ENCODE measurements at regions of chr15 and their contacts with region 1.

Region 1: GRCh38 chr15:55897560-55898336 is 95.7 kb downstream of the NEDD4 start:
- DNase-seq: peak; percentile 32
- CTCF ChIP-seq: peak; percentile 78

Region 2: DNA sequence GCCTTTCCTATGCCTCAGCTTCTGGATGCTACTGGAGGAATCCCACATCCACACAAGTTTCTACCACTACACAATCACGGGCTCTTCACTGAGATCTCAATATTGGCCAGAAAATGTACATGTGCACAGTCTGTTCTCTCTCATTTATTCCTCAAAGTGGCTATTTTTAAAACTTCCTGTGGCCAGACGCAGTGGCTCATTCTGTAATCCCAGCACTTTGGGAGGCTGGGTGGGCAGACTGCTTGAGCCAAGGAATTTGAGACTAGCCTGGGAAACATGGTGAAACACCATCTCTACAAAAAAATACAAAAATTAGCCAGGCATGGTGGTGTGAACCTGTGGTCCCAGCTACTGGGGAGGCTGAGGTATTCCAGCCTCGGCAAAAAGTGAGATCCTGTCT is 63.4 kb before region 1 on chr15:
- CTCF ChIA-PET with region 1: no interaction called
- POLR2A ChIA-PET with region 1: no interaction called
- DNase-seq: no peak
- CTCF ChIP-seq: no peak

Region 3: DNA sequence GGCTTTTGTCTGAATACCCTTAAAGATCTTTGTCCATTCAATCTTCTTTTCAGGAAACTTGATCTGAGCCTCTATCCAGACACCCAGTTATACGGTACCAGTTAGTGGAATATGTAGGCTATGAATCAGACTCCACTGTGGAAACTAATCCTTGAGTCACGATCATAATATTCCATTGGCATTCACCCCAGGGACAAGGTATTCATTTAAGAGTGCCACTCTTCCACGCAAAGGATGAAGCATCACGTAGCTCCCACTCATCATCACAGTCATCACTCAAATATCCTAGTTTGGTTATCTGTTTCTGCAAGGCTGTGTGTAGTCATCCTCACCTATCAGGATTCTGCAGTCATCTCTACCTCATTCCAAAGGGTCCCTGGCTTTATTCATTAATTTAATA is 10.0 kb after region 1 on chr15:
- CTCF ChIA-PET with region 1: interaction called, 11 read pairs
- POLR2A ChIA-PET with region 1: no interaction called
- DNase-seq: no peak
- CTCF ChIP-seq: no peak

Region 4: GRCh38 chr15:55917881-55918296 is 20.1 kb after region 1 on chr15:
- CTCF ChIA-PET with region 1: interaction called, 21 read pairs
- POLR2A ChIA-PET with region 1: no interaction called
- DNase-seq: no peak
- CTCF ChIP-seq: peak; percentile 39

Measured in GM10248 (cell line).